ENCODE measurements at regions of chr13 and their contacts with region 1.

Region 1: GRCh38 chr13:23579072-23579895 is 9.1 kb downstream of the TNFRSF19 start:
- DNase-seq: peak; percentile 89
- ATAC-seq: peak; percentile 93
- H3K4me3 ChIP-seq: peak overlapping the region; percentile 82
- H3K27ac ChIP-seq: peak overlapping the region; percentile 75
- H3K4me1 ChIP-seq: peaks cover 12% of the 10 kb centered on the region; the same call in 1 of the 2 replicates
- H3K27me3 ChIP-seq: no peaks in the 10 kb centered on the region
- CTCF ChIP-seq: no peak

Region 2: DNA sequence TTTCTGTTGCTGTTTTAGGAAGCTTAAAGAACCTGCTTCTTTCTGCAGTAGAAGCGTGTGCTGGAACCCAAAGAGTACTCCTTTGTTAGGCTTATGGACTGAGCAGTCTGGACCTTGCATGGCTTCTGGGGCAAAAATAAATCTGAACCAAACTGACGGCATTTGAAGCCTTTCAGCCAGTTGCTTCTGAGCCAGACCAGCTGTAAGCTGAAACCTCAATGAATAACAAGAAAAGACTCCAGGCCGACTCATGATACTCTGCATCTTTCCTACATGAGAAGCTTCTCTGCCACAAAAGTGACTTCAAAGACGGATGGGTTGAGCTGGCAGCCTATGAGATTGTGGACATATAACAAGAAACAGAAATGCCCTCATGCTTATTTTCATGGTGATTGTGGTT is 94.1 kb after region 1 on chr13:
- CTCF ChIA-PET with region 1: no interaction called
- POLR2A ChIA-PET with region 1: no interaction called
- intact Hi-C with region 1: loop called (anchors 2 kb)
- DNase-seq: peak; percentile 82
- ATAC-seq: peak; percentile 60
- H3K4me3 ChIP-seq: no peak overlapping the region
- H3K27ac ChIP-seq: peak overlapping the region; percentile 85
- H3K4me1 ChIP-seq: peaks cover 49% of the 10 kb centered on the region
- H3K27me3 ChIP-seq: no peaks in the 10 kb centered on the region
- CTCF ChIP-seq: no peak

Region 3: DNA sequence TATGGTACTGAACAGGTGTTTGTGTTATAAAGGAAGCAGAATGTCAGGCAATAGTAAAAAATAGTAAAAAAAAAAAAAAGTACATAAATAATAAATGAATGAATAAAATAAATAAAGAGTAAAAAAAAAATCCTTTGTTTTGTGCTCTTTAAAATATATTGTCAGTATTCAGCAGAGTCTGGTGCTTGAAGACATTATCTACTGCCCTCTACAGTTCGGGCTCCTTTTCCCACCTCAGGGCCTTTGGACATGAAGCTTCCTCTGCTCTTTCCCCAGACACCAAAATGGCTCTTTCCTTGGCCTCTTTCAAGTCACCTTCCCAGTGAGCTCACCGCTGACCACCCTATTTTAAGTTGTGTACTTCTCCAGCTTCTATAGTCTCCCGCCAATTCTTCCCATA is 128.4 kb after region 1 on chr13:
- CTCF ChIA-PET with region 1: no interaction called
- POLR2A ChIA-PET with region 1: no interaction called
- intact Hi-C with region 1: loop called (anchors 1 kb)
- DNase-seq: peak; percentile 57
- ATAC-seq: peak; percentile 64
- H3K4me3 ChIP-seq: no peak overlapping the region
- H3K27ac ChIP-seq: no peak overlapping the region
- H3K4me1 ChIP-seq: no peaks in the 10 kb centered on the region
- H3K27me3 ChIP-seq: no peaks in the 10 kb centered on the region
- CTCF ChIP-seq: peak; percentile 50

Region 4: DNA sequence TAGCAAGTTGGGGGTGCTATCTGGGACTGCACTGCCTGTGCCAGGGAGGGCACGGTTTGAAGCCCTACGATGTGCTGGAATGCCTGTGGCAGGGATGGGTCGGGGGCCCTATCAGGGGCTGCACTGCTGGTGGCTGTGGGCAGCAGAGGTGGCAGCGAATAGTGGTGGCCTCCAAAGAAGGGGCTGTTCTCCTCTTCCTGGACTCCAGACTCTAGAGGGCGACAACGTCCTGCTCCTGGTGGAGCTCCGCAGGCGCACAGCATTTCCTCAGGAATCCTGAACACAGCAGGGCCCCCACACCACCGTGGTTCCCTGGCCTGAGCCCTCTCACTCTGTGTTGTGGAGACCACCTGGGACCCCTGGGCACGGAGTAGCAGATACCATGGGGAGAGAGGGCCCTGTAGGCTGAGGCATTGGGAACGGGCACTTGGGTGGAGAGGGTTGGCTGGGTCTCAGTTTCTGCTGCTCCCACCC is 136.5 kb after region 1 on chr13:
- CTCF ChIA-PET with region 1: no interaction called
- POLR2A ChIA-PET with region 1: no interaction called
- intact Hi-C with region 1: loop called (anchors 2 kb)
- DNase-seq: peak; percentile 78
- ATAC-seq: peak; percentile 80
- H3K4me3 ChIP-seq: peak overlapping the region; percentile 60
- H3K27ac ChIP-seq: peak overlapping the region; percentile 30; the same call in 1 of the 2 replicates
- H3K4me1 ChIP-seq: peaks cover 23% of the 10 kb centered on the region
- H3K27me3 ChIP-seq: no peaks in the 10 kb centered on the region
- CTCF ChIP-seq: peak; percentile 77

Region 5: DNA sequence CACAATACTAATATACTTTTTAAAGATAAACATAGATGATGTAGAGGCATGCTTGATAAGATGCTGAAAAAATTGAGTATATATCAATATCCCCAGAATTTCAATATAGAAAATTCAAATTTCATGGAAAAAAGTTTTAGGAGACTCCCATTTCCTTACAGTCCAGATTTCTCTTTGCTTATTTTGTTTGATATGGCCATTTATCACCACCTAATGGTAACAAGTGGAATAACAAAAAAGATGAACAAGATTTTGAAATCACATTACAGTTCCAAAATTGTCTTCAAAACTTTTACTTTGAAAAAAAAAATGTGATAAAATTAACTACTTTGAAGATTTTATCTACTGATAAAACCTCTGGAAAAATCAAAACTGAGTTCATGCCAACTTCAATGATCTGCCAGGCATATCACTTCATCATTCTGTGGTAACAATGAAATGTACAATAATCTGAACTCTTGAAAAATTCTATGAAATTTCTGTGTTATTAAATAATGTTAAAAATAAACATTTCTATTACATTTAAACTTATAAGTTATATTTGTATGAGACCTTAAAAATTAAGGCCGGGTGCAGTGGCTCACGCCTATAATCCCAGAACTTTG is 292.4 kb after region 1 on chr13:
- CTCF ChIA-PET with region 1: no interaction called
- POLR2A ChIA-PET with region 1: interaction called, 4 read pairs
- intact Hi-C with region 1: loop called (anchors 2 kb)
- DNase-seq: peak; percentile 58
- ATAC-seq: no peak
- H3K4me3 ChIP-seq: no peak overlapping the region
- H3K27ac ChIP-seq: peak overlapping the region; percentile 62
- H3K4me1 ChIP-seq: peaks cover 44% of the 10 kb centered on the region
- H3K27me3 ChIP-seq: no peaks in the 10 kb centered on the region
- CTCF ChIP-seq: peak; percentile 74

Region 6: DNA sequence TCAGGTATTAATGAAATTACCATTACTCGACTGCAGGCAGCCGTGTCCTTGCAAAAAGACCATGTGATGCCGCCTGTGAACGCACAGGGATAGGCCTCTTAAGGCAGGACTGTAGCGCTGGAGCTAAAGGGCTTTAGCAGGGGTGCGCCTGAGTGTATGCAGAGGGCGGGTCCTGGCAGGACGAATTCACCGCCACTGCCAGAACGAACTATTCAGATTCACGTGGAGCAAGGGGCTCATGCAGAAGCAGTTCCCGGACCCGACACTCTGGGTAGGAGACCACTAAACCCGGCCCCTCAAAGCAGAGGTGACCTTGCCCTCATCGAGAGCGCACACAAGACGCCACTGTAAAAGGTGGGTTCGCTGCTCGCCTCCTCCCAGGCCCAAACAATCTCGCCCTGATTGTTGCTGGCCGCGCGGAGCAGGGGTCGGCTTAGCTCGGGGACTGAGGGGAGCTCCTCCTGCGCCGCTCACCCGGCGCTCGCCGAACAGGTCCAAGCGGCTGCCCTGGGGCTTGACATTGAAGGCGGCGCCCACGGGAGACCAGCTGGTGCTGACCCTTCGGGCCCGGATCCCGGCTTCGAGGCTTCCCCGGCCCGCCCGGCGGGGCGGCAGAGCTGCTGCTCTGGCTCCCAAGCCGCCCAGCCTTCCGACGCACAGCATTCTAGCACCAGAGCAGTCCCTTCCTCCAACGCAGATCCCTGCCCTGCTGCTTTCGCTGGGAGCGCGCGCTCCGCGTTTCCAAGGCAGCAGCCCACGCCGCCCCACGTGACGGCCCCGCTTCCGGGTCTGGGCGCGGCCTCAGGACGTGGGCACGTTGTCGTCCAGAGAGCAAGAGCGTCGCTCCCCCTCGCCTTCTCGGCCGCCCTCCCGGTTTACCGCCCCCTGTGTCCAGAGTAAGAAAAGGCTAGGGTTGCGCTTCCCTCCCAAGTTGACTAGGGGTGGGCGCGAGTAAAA is 309.7 kb after region 1 on chr13 and contains the start of gene MIPEP:
- CTCF ChIA-PET with region 1: no interaction called
- POLR2A ChIA-PET with region 1: no interaction called
- intact Hi-C with region 1: loop called (anchors 5 kb)
- DNase-seq: peak; percentile 94
- ATAC-seq: peak; percentile 89
- H3K4me3 ChIP-seq: peak within 1 kb of the TSS; percentile 90
- H3K27ac ChIP-seq: peak within 1 kb of the TSS; percentile 69
- H3K4me1 ChIP-seq: no peaks in the 10 kb centered on the region; the same call in 1 of the 2 replicates
- H3K27me3 ChIP-seq: no peaks in the 10 kb centered on the region
- CTCF ChIP-seq: peak; percentile 77
- total RNA-seq, gene MIPEP: 30.5 and 31.0 TPM in 2 replicates